Heart left ventricle (tissue), 16 donors: ENCODE measurements at regions of chr1 and their contacts with region 1.

Region 1: DNA sequence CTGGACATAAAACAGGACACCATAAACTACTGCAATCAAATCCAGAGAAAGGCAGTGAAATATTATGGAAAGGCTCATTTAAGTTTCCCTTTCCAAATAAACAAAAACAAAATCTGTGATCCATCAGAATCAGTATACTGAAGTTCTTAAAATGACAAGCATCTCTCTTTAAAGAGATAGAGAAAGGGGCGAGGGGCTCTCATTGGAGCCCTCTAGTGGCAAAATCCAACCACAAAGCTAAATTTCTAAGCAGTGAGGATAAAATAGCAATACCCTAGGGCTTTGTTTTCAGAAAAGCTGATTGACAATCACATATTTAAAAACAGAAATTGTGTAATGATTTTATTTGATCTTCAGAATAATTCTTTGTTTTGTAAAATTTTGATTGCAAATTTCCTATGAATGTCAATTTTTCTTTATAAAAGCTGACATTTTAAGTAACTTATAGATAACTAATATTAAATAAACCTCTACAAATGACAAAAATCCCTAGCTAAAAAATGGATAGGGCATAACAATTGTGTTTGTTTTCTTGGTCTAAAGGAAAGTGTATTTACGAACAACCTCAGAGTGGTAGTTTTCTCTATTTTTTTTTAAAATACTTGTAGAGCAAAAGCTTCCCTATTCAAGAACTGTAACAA is 138.2 kb downstream of the COL24A1 start:
- DNase-seq: no peak
- ATAC-seq: no peak
- H3K4me3 ChIP-seq: no peak overlapping the region
- H3K27ac ChIP-seq: no peak overlapping the region
- H3K4me1 ChIP-seq: no peaks in the 10 kb centered on the region
- H3K27me3 ChIP-seq: no peaks in the 10 kb centered on the region
- CTCF ChIP-seq: peak; percentile 47 to 79 (median 64)
- POLR2A ChIP-seq: no peak

Region 2: GRCh38 chr1:85894651-85895050 is 123.8 kb before region 1 on chr1:
- intact Hi-C with region 1: loop called in 2 of 10 experiments (anchors 10 kb)
- DNase-seq: peak in 2 of 5 donors; percentile 20
- ATAC-seq: no peak
- H3K4me3 ChIP-seq: no peak overlapping the region
- H3K27ac ChIP-seq: no peak overlapping the region
- H3K4me1 ChIP-seq: no peaks in the 10 kb centered on the region
- H3K27me3 ChIP-seq: no peaks in the 10 kb centered on the region
- CTCF ChIP-seq: peak in 9 of 12 donors; percentile 6 to 55 (median 31)
- POLR2A ChIP-seq: no peak

Region 3: DNA sequence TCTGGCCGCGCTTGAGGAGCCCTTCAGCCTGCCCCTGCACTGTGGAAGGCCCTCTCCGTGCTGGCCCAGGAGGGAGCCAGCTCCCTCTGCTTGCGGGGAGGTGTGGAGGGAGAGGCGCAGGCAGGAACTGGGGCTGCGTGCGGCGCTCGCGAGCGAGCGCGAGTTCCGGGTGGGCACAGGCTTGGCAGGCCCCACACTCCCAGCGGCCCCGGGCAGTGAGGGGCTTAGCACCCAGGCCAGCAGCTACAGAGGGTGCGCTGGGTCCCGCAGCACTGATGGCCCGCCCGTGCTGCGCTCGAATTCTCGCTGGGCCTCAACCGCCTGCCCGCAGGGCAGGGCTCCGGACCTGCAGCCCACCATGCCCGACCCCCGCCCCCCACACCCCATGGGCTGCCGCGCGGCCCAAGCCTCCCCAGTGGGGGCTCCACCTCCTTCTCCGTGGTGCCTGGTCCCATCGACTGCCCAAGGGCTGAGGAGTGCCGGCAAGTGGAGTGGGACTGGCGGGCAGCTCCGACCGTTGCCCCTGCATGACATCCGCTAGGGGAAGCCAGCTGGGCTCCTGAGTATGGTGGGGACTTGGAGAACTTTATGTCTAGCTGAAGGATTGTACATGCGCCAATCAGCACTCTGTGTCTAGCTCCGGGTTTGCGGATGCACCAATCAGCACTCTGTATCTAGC is 92.2 kb after region 1 on chr1:
- intact Hi-C with region 1: no loop called
- DNase-seq: no peak
- ATAC-seq: no peak
- H3K4me3 ChIP-seq: no peak overlapping the region
- H3K27ac ChIP-seq: no peak overlapping the region
- H3K4me1 ChIP-seq: no peaks in the 10 kb centered on the region
- H3K27me3 ChIP-seq: no peaks in the 10 kb centered on the region
- CTCF ChIP-seq: no peak
- POLR2A ChIP-seq: no peak